Activated CD4-positive, alpha-beta T cell treated with anti-CD3 and anti-CD28 coated beads for 36 hours (primary cell): ENCODE measurements at regions of chr17 and their contacts with region 1.

Region 1: DNA sequence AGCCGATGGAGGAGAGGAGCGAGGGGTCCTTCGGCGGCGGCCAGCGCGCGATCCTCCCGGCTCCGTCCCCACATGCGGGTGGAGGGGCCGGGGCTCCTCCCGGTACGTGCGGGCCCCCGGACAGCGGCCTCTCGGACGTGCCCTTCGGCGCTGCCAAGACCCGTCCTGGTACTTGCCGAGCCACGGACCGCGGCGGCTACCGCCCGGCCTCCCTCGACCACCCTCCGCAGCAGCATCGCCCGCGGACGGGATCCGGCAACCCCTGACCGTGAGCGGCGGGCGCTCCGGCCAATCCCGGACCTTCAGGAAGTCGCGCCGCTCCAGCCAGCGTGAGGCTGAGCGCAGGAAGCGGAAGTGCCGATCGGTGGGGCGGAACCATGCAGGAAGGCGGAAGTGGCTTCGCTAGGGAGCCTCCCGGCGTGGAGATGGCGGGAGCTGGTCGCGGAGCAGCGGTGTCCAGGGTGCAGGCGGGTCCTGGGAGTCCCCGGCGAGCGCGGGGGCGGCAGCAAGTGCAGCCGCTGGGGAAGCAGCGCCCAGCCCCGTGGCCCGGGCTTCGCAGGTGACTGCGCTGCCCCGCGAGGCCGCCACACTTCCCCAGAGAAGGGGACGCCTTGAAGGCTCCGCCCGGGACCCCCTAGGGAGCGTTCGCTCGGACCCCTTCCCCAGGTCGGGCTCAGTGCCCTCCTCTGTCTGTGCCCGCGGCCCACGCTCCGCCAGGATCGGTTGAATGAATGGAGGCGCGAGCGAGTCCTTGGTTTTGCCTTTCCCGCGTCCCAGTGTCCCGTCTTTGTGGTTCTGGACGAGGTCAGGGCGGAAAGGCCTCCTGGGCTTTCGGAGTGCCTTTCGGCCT is at the starts of genes CCDC137 and OXLD1:
- DNase-seq: peak; percentile 97
- ATAC-seq: peak; percentile 91
- H3K4me3 Mint-ChIP-seq: peak within 1 kb of the TSS; percentile 91
- H3K27ac Mint-ChIP-seq: peak within 1 kb of the TSS; percentile 97
- H3K4me1 Mint-ChIP-seq: peaks cover 53% of the 10 kb centered on the region
- H3K27me3 Mint-ChIP-seq: no peaks in the 10 kb centered on the region
- total RNA-seq, gene CCDC137: 30.0 to 36.6 TPM
- total RNA-seq, gene OXLD1: 29.4 to 45.3 TPM

Region 2: GRCh38 chr17:81428948-81429774 is 237.4 kb before region 1 on chr17:
- CTCF ChIA-PET with region 1: no interaction called
- POLR2A ChIA-PET with region 1: no interaction called
- intact Hi-C with region 1: no loop called
- DNase-seq: no peak
- ATAC-seq: no peak
- H3K4me3 Mint-ChIP-seq: no peak overlapping the region
- H3K27ac Mint-ChIP-seq: no peak overlapping the region
- H3K4me1 Mint-ChIP-seq: peaks cover 6% of the 10 kb centered on the region
- H3K27me3 Mint-ChIP-seq: peaks cover 16% of the 10 kb centered on the region

Region 3: DNA sequence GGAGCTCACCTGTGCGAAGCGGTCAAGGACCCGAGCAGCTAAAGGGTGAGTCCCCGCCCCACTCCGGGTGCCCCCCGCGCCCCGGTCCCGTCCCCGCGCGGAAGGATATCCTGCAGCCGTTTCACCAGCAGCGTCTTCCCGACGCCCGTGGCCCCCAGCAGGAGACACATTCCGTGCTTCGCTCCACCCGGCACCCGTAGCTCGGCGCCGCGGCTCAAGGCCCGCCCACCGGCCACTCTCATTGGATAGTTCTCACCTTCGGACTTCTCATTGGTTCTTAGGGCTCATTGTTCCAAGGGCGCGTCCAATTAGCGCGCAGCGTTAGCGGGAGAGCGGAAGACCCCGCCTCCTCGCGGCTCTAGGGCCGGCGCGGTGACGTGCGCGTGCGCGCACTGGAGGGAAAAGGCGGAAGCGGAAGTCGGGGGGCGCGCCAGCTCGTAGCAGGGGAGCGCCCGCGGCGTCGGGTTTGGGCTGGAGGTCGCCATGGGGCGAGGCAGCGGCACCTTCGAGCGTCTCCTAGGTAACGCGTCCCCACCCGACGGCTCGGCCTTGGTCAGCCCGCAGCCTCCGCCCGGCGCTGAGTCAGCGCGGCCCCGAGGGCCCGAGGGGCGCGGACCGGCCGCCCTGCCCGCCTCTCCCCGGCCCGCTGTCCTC is 17.1 kb after region 1 on chr17 and contains the starts of genes ARL16 and HGS:
- CTCF ChIA-PET with region 1: interaction called, 5 read pairs
- POLR2A ChIA-PET with region 1: interaction called, 7 read pairs
- intact Hi-C with region 1: loop called (anchors 1 to 2 kb)
- DNase-seq: peak; percentile 98
- ATAC-seq: peak; percentile 98
- H3K4me3 Mint-ChIP-seq: peak within 1 kb of the TSS; percentile 87
- H3K27ac Mint-ChIP-seq: peak within 1 kb of the TSS; percentile 83
- H3K4me1 Mint-ChIP-seq: peaks cover 30% of the 10 kb centered on the region
- H3K27me3 Mint-ChIP-seq: no peaks in the 10 kb centered on the region
- total RNA-seq, gene ARL16: 39.0 to 39.1 TPM
- total RNA-seq, gene HGS: 100 to 102 TPM

Region 4: DNA sequence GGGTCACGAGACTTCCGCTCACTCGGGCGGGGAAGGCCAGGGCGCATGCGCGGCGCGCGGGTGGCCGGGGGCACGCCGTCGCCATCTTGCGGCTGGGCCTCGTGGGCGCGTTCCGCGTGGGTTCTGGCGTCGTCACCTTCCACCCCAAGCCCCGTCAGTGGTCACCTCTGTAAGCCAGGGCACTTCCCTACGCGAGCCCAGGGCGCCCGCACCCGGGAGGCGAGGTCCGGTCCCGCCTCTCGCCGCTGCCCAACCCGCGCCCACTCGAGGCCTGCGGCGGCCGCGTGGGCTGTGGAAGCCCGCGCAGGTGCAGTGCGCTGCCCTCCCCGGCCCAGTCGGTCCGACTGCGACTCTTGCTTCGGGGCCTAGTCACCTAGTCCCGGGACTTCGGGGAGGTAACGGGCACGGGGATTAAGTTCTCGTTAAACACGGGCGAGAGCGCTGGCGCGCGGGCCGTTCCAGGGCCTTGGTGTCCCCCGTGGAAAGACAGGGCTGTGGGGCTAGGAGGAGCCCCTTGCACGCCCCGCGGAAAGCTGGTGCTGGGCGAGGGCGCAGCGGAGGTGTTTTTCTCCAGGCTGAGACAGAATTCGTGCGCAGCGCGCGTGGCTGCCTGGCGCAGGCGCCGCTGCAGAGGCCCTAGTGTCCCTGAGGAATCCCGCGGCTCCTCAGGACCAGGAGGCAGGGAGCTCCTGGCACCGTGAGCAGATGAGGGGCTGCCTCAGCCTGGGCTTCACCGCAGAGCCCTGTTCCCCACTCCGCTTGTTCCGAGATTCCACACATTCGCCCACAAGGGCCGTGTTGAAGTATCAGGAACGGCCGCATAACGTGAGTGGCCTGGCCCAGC is 205.0 kb after region 1 on chr17:
- CTCF ChIA-PET with region 1: no interaction called
- POLR2A ChIA-PET with region 1: no interaction called
- intact Hi-C with region 1: no loop called
- DNase-seq: peak; percentile 98
- ATAC-seq: no peak
- H3K4me3 Mint-ChIP-seq: peak overlapping the region; percentile 81
- H3K27ac Mint-ChIP-seq: peak overlapping the region; percentile 92
- H3K4me1 Mint-ChIP-seq: peaks cover 34% of the 10 kb centered on the region
- H3K27me3 Mint-ChIP-seq: no peaks in the 10 kb centered on the region